PC-3 (cell line): ENCODE measurements at regions of chr4 and their contacts with region 1.

Region 1: DNA sequence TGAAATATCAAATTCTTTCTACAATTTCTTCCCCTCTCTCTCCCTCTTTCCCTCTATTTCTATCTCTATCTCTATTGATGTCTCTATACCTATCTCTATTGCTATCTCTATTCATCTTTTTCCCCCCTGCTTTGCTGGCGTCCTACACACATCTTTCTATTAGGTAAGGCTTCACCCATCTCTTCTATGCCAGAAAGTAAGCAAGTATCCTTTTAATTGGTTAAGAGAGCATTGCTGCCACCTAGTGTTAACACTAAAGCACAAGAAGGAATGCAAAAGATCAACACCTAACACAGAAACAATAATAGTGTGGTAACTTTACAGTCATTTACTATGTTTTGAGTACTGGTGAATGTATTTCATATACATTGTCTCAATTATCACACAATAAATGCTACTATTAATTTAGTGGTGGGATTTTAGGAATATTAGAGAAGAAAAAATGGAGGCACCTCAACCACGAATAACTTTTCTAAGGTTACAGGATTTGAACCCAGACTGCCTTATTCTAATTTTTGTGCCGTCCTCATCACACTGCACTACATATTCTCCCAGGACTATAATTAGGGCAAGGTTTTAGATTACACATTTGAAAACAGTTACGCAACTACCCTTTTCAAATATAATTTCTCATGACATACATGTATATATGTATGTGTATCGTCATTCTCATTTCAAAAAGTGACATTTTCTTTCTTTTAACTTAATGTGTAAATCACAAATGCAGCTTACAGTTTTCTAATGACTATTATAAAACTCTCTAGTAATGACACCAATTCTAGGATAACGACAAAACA is 3.7 kb upstream of the C4orf36 start:
- DNase-seq: peak; percentile 82
- ATAC-seq: no peak
- H3K4me3 ChIP-seq: no peak overlapping the region
- H3K27ac ChIP-seq: no peak overlapping the region
- H3K4me1 ChIP-seq: peaks cover 24% of the 10 kb centered on the region
- H3K27me3 ChIP-seq: no peaks in the 10 kb centered on the region
- CTCF ChIP-seq: peak; percentile 87

Region 2: DNA sequence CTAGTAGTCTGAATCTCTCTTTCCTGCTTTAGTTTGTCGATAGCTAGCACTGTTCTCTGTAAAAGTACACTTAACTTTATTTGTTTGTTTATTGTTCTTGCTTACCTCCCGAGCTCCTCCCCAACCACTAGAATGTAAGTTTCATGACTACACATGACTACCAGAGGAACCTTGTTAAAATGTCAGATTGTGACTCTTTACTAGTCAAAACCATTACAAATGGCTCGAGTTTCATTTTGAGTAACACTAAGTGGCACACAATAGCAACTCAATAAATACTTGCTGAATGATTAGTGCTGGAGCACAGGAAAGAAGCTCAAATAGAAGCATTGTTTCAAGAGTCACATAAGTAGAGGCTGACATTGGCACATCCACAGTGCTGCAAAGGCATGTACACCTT is 652.1 kb before region 1 on chr4:
- CTCF ChIA-PET with region 1: no interaction called
- POLR2A ChIA-PET with region 1: no interaction called
- intact Hi-C with region 1: no loop called
- DNase-seq: peak; percentile 7
- ATAC-seq: no peak
- H3K4me3 ChIP-seq: no peak overlapping the region
- H3K27ac ChIP-seq: no peak overlapping the region
- H3K4me1 ChIP-seq: no peaks in the 10 kb centered on the region
- H3K27me3 ChIP-seq: no peaks in the 10 kb centered on the region
- CTCF ChIP-seq: no peak

Region 3: DNA sequence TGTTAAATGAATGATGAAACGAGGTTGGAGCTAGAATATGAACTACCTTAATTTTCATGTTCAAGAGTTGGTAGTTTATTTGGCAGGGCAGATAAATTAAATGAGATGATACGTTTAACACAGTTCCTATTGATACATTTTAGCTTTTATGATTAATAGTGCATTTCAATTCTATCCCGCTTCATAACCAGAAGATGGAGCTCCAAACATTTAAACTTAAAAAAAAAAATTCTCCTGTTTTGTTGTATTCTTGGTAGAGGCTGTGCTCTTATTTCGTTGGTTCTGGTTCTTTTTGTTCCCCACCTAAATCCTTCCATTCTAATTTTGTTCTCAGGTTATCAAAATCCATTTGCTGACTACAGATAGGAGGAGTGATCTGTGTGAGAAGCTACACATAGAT is 373.5 kb before region 1 on chr4:
- CTCF ChIA-PET with region 1: interaction called, 4 read pairs
- POLR2A ChIA-PET with region 1: no interaction called
- intact Hi-C with region 1: loop called (anchors 1 kb)
- DNase-seq: peak; percentile 37
- ATAC-seq: peak; percentile 48; the same call in 1 of the 2 replicates
- H3K4me3 ChIP-seq: no peak overlapping the region
- H3K27ac ChIP-seq: peak overlapping the region; percentile 32
- H3K4me1 ChIP-seq: peaks cover 14% of the 10 kb centered on the region; the same call in 1 of the 2 replicates
- H3K27me3 ChIP-seq: no peaks in the 10 kb centered on the region
- CTCF ChIP-seq: peak; percentile 63

Region 4: DNA sequence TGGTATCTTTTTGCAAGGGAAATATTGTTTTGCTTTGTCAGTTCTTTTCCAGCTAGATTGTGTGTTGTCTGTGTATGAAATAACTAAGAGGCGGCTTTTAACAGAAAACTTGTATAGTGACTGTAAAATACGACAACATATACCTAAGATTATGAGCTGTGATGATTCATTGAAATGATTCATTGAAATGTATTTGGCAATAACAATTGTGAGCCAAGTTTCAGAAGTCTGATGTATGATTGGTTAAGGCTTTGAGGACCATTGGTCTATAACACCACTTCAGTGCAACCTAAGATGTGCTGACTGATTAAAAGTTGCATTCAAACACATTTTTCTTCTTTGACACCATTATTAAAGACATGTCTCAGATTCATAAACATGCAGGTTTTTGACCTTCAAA is 225.2 kb before region 1 on chr4:
- CTCF ChIA-PET with region 1: no interaction called
- POLR2A ChIA-PET with region 1: no interaction called
- intact Hi-C with region 1: loop called (anchors 10 kb)
- DNase-seq: peak; percentile 91
- ATAC-seq: peak; percentile 77
- H3K4me3 ChIP-seq: no peak overlapping the region
- H3K27ac ChIP-seq: peak overlapping the region; percentile 56
- H3K4me1 ChIP-seq: peaks cover 26% of the 10 kb centered on the region
- H3K27me3 ChIP-seq: no peaks in the 10 kb centered on the region
- CTCF ChIP-seq: no peak

Region 5: DNA sequence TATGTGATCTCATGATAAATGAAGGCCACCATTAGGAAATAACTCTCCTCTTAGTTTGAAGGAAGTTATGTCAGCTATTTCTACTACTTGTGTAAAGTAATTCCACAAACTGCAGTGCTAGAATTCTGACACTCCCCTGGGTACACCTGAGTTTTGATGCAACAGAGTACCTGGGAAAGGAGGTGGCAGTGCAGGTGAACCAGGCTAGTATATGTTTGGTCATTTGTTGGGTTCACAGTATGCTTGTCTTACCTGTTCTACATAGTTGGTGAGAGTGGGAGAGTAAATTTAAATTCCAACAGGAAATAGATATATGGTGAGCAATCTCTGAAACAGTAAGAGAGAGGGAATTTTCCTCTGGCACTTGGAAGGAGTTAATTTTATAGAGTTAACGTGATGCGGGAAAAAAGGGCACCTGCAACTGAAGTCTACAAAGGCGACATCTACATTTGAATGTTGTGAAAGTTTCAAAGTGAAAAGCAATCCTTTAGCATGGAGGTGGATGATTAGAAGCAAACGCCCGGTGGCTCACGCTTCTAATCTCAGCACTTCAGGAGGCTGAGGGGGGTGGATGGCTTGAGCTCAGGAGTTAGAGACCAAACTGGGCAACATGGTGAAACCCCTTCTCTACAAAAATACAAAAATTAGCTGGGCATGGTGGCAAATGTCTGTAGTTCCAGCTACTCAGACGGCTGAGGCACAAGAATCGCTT is 38.4 kb before region 1 on chr4:
- CTCF ChIA-PET with region 1: no interaction called
- POLR2A ChIA-PET with region 1: no interaction called
- intact Hi-C with region 1: loop called (anchors 2 kb)
- DNase-seq: peak; percentile 72
- ATAC-seq: peak; percentile 58
- H3K4me3 ChIP-seq: no peak overlapping the region
- H3K27ac ChIP-seq: peak overlapping the region; percentile 60; the same call in 1 of the 2 replicates
- H3K4me1 ChIP-seq: peaks cover 35% of the 10 kb centered on the region
- H3K27me3 ChIP-seq: no peaks in the 10 kb centered on the region
- CTCF ChIP-seq: no peak

Region 6: GRCh38 chr4:86908251-86908657 is 12.4 kb after region 1 on chr4:
- CTCF ChIA-PET with region 1: no interaction called
- POLR2A ChIA-PET with region 1: no interaction called
- intact Hi-C with region 1: no loop called
- DNase-seq: no peak
- ATAC-seq: no peak
- H3K4me3 ChIP-seq: no peak overlapping the region
- H3K27ac ChIP-seq: no peak overlapping the region
- H3K4me1 ChIP-seq: no peaks in the 10 kb centered on the region
- H3K27me3 ChIP-seq: no peaks in the 10 kb centered on the region
- CTCF ChIP-seq: no peak